ENCODE measurements at regions of chr9 and their contacts with region 1.

Region 1: GRCh38 chr9:33192493-33193255 is 25.5 kb upstream of the B4GALT1 start:
- DNase-seq: no peak
- ATAC-seq: no peak
- H3K4me3 Mint-ChIP-seq: no peak overlapping the region
- H3K27ac Mint-ChIP-seq: no peak overlapping the region
- H3K4me1 Mint-ChIP-seq: peaks cover 6% of the 10 kb centered on the region
- H3K27me3 Mint-ChIP-seq: peaks cover 3% of the 10 kb centered on the region
- CTCF ChIP-seq: no peak

Region 2: GRCh38 chr9:33177639-33178038 is 15.0 kb before region 1 on chr9:
- CTCF ChIA-PET with region 1: no interaction called
- POLR2A ChIA-PET with region 1: interaction called, 3 read pairs
- intact Hi-C with region 1: loop called (anchors 2 kb)
- DNase-seq: no peak
- ATAC-seq: peak; percentile 50
- H3K4me3 Mint-ChIP-seq: no peak overlapping the region
- H3K27ac Mint-ChIP-seq: peak overlapping the region; percentile 12
- H3K4me1 Mint-ChIP-seq: peaks cover 11% of the 10 kb centered on the region
- H3K27me3 Mint-ChIP-seq: no peaks in the 10 kb centered on the region
- CTCF ChIP-seq: no peak

Region 3: DNA sequence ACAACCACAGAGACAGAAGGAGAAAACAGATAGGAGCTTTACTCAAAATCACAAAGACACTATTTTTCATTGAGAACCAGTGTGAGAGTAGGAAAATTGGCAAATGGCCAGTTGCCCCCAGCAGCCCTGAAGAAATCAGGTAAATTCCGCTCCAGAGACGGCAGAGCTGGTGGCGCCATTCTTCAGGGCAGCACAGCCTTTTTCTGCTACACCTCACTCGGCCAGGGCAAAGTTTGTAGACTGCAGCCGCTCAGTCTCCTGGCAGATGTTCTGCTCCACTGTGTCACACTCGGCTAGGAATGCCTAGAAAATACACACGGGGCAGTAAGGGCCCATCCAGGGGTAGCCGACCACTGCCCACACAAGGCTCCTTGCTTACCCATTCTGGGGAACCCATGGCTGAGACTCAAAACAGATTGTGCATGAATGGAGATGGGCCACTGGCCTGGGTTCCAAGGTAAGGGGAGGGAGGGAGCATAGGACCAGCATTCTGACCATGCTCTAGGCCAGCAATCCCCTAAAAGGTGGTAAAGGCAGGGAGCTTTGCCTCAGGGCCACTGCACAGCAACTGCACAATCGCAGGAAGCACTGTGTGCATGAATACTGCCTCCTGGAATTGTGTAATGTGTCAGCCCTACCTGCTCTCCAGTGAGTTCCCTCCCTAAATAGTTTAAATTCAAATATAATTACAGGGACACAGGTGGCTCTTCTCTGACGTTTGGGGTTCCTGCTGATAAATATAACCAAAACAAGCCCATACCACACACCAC is 62.5 kb after region 1 on chr9:
- CTCF ChIA-PET with region 1: no interaction called
- POLR2A ChIA-PET with region 1: no interaction called
- intact Hi-C with region 1: no loop called
- DNase-seq: no peak
- ATAC-seq: no peak
- H3K4me3 Mint-ChIP-seq: no peak overlapping the region
- H3K27ac Mint-ChIP-seq: no peak overlapping the region
- H3K4me1 Mint-ChIP-seq: no peaks in the 10 kb centered on the region
- H3K27me3 Mint-ChIP-seq: no peaks in the 10 kb centered on the region
- CTCF ChIP-seq: no peak